GM12878 (cell line): ENCODE measurements at regions of chr14 and their contacts with region 1.

Region 1: GRCh38 chr14:66495218-66496098 is 9.3 kb downstream of the CCDC196 start:
- DNase-seq: peak; percentile 45
- ATAC-seq: peak; percentile 96
- H3K4me3 ChIP-seq: no peak overlapping the region
- H3K27ac ChIP-seq: no peak overlapping the region
- H3K4me1 ChIP-seq: peaks cover 3% of the 10 kb centered on the region; the same call in 1 of the 2 replicates
- H3K27me3 ChIP-seq: no peaks in the 10 kb centered on the region
- CTCF ChIP-seq: peak; percentile 70 to 84 (median 84)
- EP300 ChIP-seq: no peak
- POLR2A ChIP-seq: no peak
- RAD21 ChIP-seq: peak; percentile 87

Region 2: GRCh38 chr14:66351310-66351709 is 144.1 kb before region 1 on chr14:
- CTCF ChIA-PET with region 1: no interaction called
- POLR2A ChIA-PET with region 1: no interaction called
- RAD21 ChIA-PET with region 1: no interaction called
- SMC1A ChIA-PET with region 1: no interaction called
- in situ Hi-C with region 1: no loop called
- intact Hi-C with region 1: no loop called
- DNase-seq: no peak
- ATAC-seq: no peak
- H3K4me3 ChIP-seq: no peak overlapping the region
- H3K27ac ChIP-seq: no peak overlapping the region
- H3K4me1 ChIP-seq: no peaks in the 10 kb centered on the region
- H3K27me3 ChIP-seq: no peaks in the 10 kb centered on the region
- CTCF ChIP-seq: no peak
- EP300 ChIP-seq: no peak
- POLR2A ChIP-seq: no peak
- RAD21 ChIP-seq: no peak

Region 3: DNA sequence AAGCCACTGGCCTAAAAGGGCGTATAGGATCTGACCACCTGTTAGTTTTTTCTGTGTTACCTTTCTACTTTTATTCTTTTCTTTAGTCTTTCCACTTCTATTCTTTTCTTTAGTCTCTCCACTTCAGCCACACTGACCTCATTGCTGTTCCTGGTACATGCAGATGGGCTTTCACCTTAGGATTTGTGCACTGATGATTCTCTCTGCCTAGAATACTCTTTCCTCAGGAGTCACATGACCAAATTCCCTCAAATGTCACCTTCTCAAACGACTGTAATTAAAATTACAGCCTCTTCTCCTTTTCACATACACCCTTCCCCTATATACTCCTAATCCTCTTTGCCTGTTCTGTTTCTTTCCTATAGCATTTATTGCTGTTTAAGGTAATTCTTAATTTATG is 48.5 kb after region 1 on chr14:
- CTCF ChIA-PET with region 1: interaction called, 27 read pairs
- POLR2A ChIA-PET with region 1: interaction called, 3 read pairs
- RAD21 ChIA-PET with region 1: interaction called, 14 read pairs
- SMC1A ChIA-PET with region 1: interaction called, 30 read pairs
- in situ Hi-C with region 1: no loop called
- intact Hi-C with region 1: loop called (anchors 1 kb)
- DNase-seq: no peak
- ATAC-seq: no peak
- H3K4me3 ChIP-seq: no peak overlapping the region
- H3K27ac ChIP-seq: no peak overlapping the region
- H3K4me1 ChIP-seq: no peaks in the 10 kb centered on the region
- H3K27me3 ChIP-seq: no peaks in the 10 kb centered on the region
- CTCF ChIP-seq: no peak
- EP300 ChIP-seq: no peak
- POLR2A ChIP-seq: no peak
- RAD21 ChIP-seq: no peak

Region 4: GRCh38 chr14:66662374-66662773 is 166.9 kb after region 1 on chr14:
- CTCF ChIA-PET with region 1: interaction called, 19 read pairs
- POLR2A ChIA-PET with region 1: no interaction called
- RAD21 ChIA-PET with region 1: interaction called, 4 read pairs
- SMC1A ChIA-PET with region 1: interaction called, 5 read pairs
- in situ Hi-C with region 1: no loop called
- intact Hi-C with region 1: no loop called
- DNase-seq: no peak
- ATAC-seq: peak; percentile 46; the same call in 1 of the 3 replicates
- H3K4me3 ChIP-seq: no peak overlapping the region
- H3K27ac ChIP-seq: no peak overlapping the region
- H3K4me1 ChIP-seq: no peaks in the 10 kb centered on the region
- H3K27me3 ChIP-seq: no peaks in the 10 kb centered on the region
- CTCF ChIP-seq: peak in 2 of 3 experiments; percentile 7 to 25; a peak in 2 of 6 replicates
- EP300 ChIP-seq: no peak
- POLR2A ChIP-seq: no peak
- RAD21 ChIP-seq: peak; percentile 36; the same call in 1 of the 2 replicates

Region 5: DNA sequence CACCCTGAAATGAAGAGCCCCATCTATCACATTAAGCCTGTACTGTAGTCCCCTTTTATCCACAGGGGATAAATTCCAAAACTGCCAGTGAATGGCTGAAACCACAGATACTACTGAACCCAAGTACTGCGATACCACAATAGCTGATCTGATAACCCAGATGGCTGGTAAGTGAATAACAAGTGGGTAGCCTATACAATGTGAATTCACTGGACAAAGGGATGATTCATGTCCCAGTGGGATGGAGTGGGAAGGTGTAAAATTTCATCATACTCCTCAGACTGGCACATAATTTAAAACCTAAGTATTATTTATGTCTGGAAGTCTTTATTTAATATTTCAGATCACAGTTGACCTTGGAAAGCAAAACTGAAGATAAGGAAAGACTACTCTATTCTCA is 213.8 kb after region 1 on chr14:
- CTCF ChIA-PET with region 1: no interaction called
- POLR2A ChIA-PET with region 1: no interaction called
- RAD21 ChIA-PET with region 1: no interaction called
- SMC1A ChIA-PET with region 1: no interaction called
- in situ Hi-C with region 1: no loop called
- intact Hi-C with region 1: no loop called
- DNase-seq: no peak
- ATAC-seq: 0 out of 3 replicates have a peak, but pooled peaks have one; percentile 25
- H3K4me3 ChIP-seq: no peak overlapping the region
- H3K27ac ChIP-seq: no peak overlapping the region
- H3K4me1 ChIP-seq: no peaks in the 10 kb centered on the region
- H3K27me3 ChIP-seq: no peaks in the 10 kb centered on the region
- CTCF ChIP-seq: no peak
- EP300 ChIP-seq: no peak
- POLR2A ChIP-seq: no peak
- RAD21 ChIP-seq: no peak

Region 6: GRCh38 chr14:67111022-67111421 is 615.6 kb after region 1 on chr14:
- CTCF ChIA-PET with region 1: interaction called, 3 read pairs
- POLR2A ChIA-PET with region 1: no interaction called
- RAD21 ChIA-PET with region 1: interaction called, 5 read pairs
- SMC1A ChIA-PET with region 1: interaction called, 3 read pairs
- in situ Hi-C with region 1: loop called (anchors 10 kb)
- intact Hi-C with region 1: no loop called
- DNase-seq: no peak
- ATAC-seq: no peak
- H3K4me3 ChIP-seq: no peak overlapping the region
- H3K27ac ChIP-seq: no peak overlapping the region
- H3K4me1 ChIP-seq: no peaks in the 10 kb centered on the region
- H3K27me3 ChIP-seq: no peaks in the 10 kb centered on the region
- CTCF ChIP-seq: no peak
- EP300 ChIP-seq: no peak
- POLR2A ChIP-seq: no peak
- RAD21 ChIP-seq: no peak

Region 7: GRCh38 chr14:67285876-67286452 is 790.5 kb after region 1 on chr14:
- CTCF ChIA-PET with region 1: interaction called, 11 read pairs
- POLR2A ChIA-PET with region 1: no interaction called
- RAD21 ChIA-PET with region 1: interaction called, 10 read pairs
- SMC1A ChIA-PET with region 1: interaction called, 11 read pairs
- in situ Hi-C with region 1: no loop called
- intact Hi-C with region 1: no loop called
- DNase-seq: no peak
- ATAC-seq: no peak
- H3K4me3 ChIP-seq: no peak overlapping the region
- H3K27ac ChIP-seq: no peak overlapping the region
- H3K4me1 ChIP-seq: no peaks in the 10 kb centered on the region
- H3K27me3 ChIP-seq: no peaks in the 10 kb centered on the region
- CTCF ChIP-seq: peak in 2 of 3 experiments; percentile 38 to 46; a peak in 2 of 6 replicates
- EP300 ChIP-seq: no peak
- POLR2A ChIP-seq: no peak
- RAD21 ChIP-seq: peak; percentile 60